Panc1 (cell line): ENCODE measurements at regions of chr13 and their contacts with region 1.

Region 1: GRCh38 chr13:72505376-72505775 is 222.1 kb downstream of the MZT1 start:
- DNase-seq: no peak
- ATAC-seq: no peak
- H3K4me3 ChIP-seq: no peak overlapping the region
- H3K27ac ChIP-seq: no peak overlapping the region
- H3K4me1 ChIP-seq: no peaks in the 10 kb centered on the region
- H3K27me3 ChIP-seq: no peaks in the 10 kb centered on the region
- CTCF ChIP-seq: no peak

Region 2: DNA sequence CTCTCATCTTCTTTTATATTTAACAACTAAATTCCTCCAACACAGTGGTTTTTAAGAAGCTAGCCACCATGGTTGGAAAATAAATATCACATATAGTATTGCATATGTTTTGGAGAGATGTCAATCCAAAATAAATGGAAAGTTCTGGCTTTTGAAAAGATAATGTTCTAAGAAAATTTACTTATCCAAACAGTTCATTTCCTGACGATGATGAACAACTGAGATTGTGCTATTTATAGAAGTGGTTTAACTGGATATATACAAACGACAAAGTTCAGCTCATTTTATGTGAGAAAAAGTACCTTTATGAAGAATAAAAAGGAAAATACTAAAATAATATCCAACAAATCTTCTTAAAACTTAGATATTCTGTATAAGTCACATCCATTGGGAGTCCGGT is 47.4 kb after region 1 on chr13:
- CTCF ChIA-PET with region 1: no interaction called
- POLR2A ChIA-PET with region 1: interaction called, 11 read pairs
- in situ Hi-C with region 1: no loop called
- intact Hi-C with region 1: no loop called
- DNase-seq: no peak
- ATAC-seq: no peak
- H3K4me3 ChIP-seq: no peak overlapping the region
- H3K27ac ChIP-seq: no peak overlapping the region
- H3K4me1 ChIP-seq: no peaks in the 10 kb centered on the region
- H3K27me3 ChIP-seq: no peaks in the 10 kb centered on the region
- CTCF ChIP-seq: no peak